Ascending aorta (tissue), 2 donors: ENCODE measurements at regions of chr1 and their contacts with region 1.

Region 1: GRCh38 chr1:226308723-226309315 is at the start of gene LIN9:
- DNase-seq: peak; percentile 67 to 93
- H3K4me3 ChIP-seq: peak within 1 kb of the TSS; percentile 93 to 100
- H3K27ac ChIP-seq: peak within 1 kb of the TSS; percentile 63 to 74
- H3K4me1 ChIP-seq: peaks cover 2 to 8% of the 10 kb centered on the region in 2 donors
- H3K27me3 ChIP-seq: no peaks in the 10 kb centered on the region
- CTCF ChIP-seq: no peak
- total RNA-seq, gene LIN9: 0.43 TPM

Region 2: GRCh38 chr1:226186124-226187018 is 122.4 kb before region 1 on chr1 and contains the start of gene ACBD3:
- intact Hi-C with region 1: loop called (anchors 1 kb)
- DNase-seq: peak; percentile 57 to 93
- H3K4me3 ChIP-seq: peak within 1 kb of the TSS; percentile 96 to 100
- H3K27ac ChIP-seq: peak within 1 kb of the TSS; percentile 87 to 98
- H3K4me1 ChIP-seq: peaks cover 6 to 17% of the 10 kb centered on the region in 2 donors
- H3K27me3 ChIP-seq: no peaks in the 10 kb centered on the region
- CTCF ChIP-seq: no peak
- total RNA-seq, gene ACBD3: 31.5 TPM

Region 3: DNA sequence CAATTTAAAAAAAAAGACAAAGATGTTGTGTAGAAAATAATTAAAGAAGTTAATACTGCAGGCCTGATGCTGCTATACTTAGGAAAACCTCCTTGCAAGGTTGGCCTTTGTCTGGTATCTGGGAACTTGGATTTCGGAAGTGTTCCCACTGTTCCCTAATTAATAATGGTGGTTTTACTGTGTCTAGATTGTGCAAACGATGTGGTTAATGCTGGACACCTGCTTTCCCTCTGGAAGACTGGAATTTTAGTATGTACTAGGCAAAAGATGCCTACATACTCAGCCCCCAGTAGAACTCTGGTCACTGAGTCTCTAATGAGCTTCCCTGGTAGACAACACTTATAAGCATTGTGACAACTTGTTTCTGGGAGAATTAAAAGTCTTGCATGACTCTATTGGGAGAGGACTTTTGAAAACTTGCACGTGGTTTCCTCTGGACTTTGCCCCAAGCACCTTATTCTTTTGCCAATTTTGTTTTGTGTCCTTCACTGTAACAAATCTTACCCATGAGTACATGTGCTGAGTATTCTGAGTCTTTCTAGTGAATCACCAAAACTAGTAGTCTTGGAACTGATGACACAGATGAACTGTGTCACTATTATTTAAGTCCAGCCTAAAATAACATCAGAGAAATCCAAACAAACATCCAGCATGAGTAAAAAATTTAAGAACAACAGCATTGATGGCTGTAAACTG is 40.2 kb before region 1 on chr1:
- intact Hi-C with region 1: loop called (anchors 2 kb)
- DNase-seq: no peak
- H3K4me3 ChIP-seq: no peak overlapping the region
- H3K27ac ChIP-seq: peak overlapping the region in 1 of 2 donors; percentile 30
- H3K4me1 ChIP-seq: no peaks in the 10 kb centered on the region
- H3K27me3 ChIP-seq: no peaks in the 10 kb centered on the region
- CTCF ChIP-seq: no peak

Region 4: DNA sequence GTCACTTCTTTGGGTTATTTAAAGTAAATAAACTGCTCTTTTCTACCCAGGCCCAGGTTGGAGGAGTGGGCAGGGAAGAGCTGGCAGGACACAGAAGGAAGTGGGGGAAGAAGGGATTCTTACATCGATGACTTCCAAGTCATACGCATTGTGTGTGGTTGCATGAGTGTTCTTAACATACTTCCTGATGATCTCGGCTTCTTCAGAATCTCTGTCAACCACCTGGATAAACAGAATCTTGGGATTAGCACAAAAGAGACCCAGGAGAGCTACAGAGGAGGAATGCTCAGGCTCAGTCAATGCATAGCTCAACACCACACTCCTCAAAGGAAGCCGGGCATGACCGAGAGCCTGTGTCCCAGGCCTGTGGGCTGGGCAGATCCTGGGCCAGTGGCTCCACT is 57.0 kb after region 1 on chr1:
- intact Hi-C with region 1: loop called (anchors 1 kb)
- DNase-seq: no peak
- H3K4me3 ChIP-seq: no peak overlapping the region
- H3K27ac ChIP-seq: peak overlapping the region in 1 of 2 donors; percentile 81
- H3K4me1 ChIP-seq: peaks cover 0 to 11% of the 10 kb centered on the region in 2 donors
- H3K27me3 ChIP-seq: no peaks in the 10 kb centered on the region
- CTCF ChIP-seq: no peak

Region 5: GRCh38 chr1:226407497-226408284 is 98.9 kb after region 1 on chr1 and contains the start of gene PARP1:
- intact Hi-C with region 1: loop called (anchors 2 kb)
- DNase-seq: peak; percentile 74 to 96
- H3K4me3 ChIP-seq: peak within 1 kb of the TSS; percentile 84 to 87
- H3K27ac ChIP-seq: peak within 1 kb of the TSS; percentile 76 to 80
- H3K4me1 ChIP-seq: peaks cover 8 to 22% of the 10 kb centered on the region in 2 donors
- H3K27me3 ChIP-seq: no peaks in the 10 kb centered on the region
- CTCF ChIP-seq: peak; percentile 24 to 82 (median 35)
- total RNA-seq, gene PARP1: 37.1 TPM

Region 6: DNA sequence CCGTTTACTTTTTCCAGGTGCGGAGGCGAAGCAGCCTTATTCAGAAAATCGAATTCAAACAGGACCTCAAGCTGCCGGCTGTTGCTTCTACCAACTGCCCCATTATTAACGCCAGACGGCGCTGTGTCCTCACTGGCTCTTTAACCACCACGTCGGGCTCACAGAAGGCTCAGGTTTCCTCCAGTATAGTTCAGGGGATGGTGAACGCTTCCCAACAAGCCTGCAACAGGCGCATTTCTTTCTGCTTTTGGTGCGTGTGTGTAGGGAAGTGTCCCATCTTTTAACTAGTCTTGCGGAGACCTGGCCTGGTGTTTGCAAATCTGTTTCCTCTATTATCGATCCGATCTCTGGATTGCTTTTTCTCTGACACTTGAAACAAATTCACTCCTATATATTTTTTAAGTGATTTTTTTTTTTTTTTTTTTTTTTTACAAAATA is 239.0 kb after region 1 on chr1:
- intact Hi-C with region 1: loop called (anchors 5 kb)
- DNase-seq: peak; percentile 30 to 91
- H3K4me3 ChIP-seq: peak overlapping the region; percentile 65 to 68
- H3K27ac ChIP-seq: no peak overlapping the region
- H3K4me1 ChIP-seq: peaks cover 0 to 18% of the 10 kb centered on the region in 2 donors
- H3K27me3 ChIP-seq: no peaks in the 10 kb centered on the region
- CTCF ChIP-seq: peak; percentile 73 to 92 (median 90)